ENCODE measurements at regions of chr15 and their contacts with region 1.

Region 1: GRCh38 chr15:92578096-92578835 is 77.3 kb downstream of the FAM174B start:
- DNase-seq: no peak
- H3K4me3 ChIP-seq: no peak overlapping the region
- H3K27ac ChIP-seq: no peak overlapping the region
- H3K4me1 ChIP-seq: no peaks in the 10 kb centered on the region
- H3K27me3 ChIP-seq: no peaks in the 10 kb centered on the region
- CTCF ChIP-seq: no peak

Region 2: DNA sequence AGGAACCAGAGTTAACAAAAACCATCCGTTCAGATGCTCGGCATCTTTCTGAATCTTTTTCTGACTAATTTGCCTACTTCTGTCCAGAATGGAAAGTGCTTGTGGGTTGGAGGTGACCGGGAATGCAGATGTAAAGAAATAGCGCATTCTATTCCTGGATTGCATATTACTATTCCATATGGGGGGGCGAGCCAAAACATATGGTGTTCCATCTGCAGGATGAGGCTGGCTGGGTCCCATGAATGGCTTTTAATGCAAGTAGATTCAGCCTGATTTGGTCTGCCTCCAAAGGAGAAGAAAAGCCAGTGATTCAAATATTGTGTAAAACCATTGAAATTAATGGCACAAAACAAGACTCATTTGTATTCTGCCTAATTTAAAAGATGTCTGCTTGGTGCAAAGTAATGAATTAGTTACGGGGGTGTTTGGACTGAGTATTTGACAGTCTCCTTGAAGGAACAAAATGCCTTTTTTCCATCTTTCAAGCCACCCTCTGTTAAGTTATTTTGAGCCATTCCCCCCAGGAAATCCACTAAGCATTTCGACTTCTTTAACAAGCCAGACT is 85.6 kb before region 1 on chr15:
- CTCF ChIA-PET with region 1: no interaction called
- dilution Hi-C with region 1: loop called (anchors 10 kb)
- in situ Hi-C with region 1: no loop called
- intact Hi-C with region 1: no loop called
- DNase-seq: no peak
- H3K4me3 ChIP-seq: no peak overlapping the region
- H3K27ac ChIP-seq: no peak overlapping the region
- H3K4me1 ChIP-seq: no peaks in the 10 kb centered on the region
- H3K27me3 ChIP-seq: peaks cover 5% of the 10 kb centered on the region
- CTCF ChIP-seq: no peak